ENCODE measurements at regions of chr15 and their contacts with region 1.

Region 1: GRCh38 chr15:88904624-88905327 is 8.4 kb downstream of the MFGE8 start:
- DNase-seq: peak; percentile 94
- H3K4me3 Mint-ChIP-seq: no peak overlapping the region
- H3K27ac Mint-ChIP-seq: peak overlapping the region; percentile 77
- H3K4me1 Mint-ChIP-seq: peaks cover 30% of the 10 kb centered on the region
- H3K27me3 Mint-ChIP-seq: no peaks in the 10 kb centered on the region

Region 2: DNA sequence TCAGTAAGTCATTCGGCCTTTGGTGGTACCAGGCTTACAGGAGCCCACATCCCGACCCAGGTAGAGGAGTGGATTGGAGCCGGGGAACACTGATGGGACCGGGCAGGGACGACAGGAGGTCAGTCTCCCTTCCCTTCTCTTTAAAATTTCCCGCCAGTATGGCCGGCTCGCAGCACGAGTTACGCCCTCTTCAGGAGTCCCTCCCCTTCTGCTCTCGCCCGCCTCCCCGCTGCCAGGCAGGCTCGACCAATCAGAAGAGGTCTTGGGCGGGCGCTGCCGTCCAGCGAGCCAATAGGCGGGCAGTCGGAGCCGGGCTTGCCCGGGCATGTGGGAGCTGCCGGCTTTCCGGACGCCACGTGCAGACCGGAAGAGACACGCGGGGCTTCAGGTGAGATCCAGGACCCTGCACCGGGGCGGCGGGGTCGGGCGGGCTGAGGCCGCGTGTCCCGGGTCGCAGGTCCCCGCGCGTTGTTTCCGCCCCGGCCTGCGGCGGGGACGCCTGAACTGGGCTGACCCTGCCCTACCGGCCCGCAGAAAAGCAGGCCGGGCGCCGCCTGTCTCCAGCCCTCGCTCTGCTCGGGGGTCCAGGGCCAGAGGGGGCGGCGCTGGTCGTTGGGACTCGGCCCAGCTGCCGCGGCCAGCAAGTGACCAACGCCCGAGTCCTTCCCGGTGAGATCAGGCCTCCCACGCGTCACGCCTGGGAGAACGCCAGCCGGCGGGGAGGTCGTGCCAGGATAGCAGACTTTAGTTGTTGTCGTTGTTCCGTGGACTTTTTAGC is 283.6 kb before region 1 on chr15 and contains the start of gene AEN:
- CTCF ChIA-PET with region 1: interaction called, 10 read pairs
- POLR2A ChIA-PET with region 1: interaction called, 6 read pairs
- DNase-seq: peak; percentile 97
- H3K4me3 Mint-ChIP-seq: peak within 1 kb of the TSS; percentile 85
- H3K27ac Mint-ChIP-seq: peak within 1 kb of the TSS; percentile 91
- H3K4me1 Mint-ChIP-seq: peaks cover 42% of the 10 kb centered on the region
- H3K27me3 Mint-ChIP-seq: peaks cover 2% of the 10 kb centered on the region
- total RNA-seq, gene AEN: 32.7 to 33.5 TPM

Region 3: GRCh38 chr15:88791637-88792036 is 113.1 kb before region 1 on chr15:
- CTCF ChIA-PET with region 1: no interaction called
- POLR2A ChIA-PET with region 1: no interaction called
- DNase-seq: no peak
- H3K4me3 Mint-ChIP-seq: no peak overlapping the region
- H3K27ac Mint-ChIP-seq: no peak overlapping the region
- H3K4me1 Mint-ChIP-seq: no peaks in the 10 kb centered on the region
- H3K27me3 Mint-ChIP-seq: peaks cover 35% of the 10 kb centered on the region

Region 4: DNA sequence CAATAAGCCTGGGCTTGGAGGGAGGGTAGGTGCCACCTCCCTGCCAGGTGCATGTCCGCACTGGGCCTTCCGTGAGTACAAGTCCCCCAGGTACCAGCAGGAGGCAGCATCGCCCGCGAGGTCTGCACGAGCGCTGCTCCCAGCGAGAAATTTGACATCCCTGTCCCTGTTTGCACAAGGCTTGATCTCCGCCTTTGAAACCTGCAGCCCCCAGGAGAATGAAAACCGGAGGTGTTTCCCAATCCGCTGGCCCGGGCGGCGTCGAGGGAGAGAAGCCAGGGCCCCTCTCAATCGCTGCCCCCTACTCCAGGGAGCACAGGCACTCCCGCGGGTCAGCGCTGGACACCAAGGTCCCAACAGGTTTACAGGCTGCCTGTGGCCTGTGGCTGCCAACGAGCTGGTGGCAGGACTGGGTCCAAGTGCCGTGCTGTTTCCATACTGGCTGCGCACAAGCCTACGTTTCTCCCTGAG is 10.4 kb before region 1 on chr15:
- CTCF ChIA-PET with region 1: interaction called, 73 read pairs
- POLR2A ChIA-PET with region 1: interaction called, 16 read pairs
- DNase-seq: peak; percentile 88
- H3K4me3 Mint-ChIP-seq: peak overlapping the region; percentile 79
- H3K27ac Mint-ChIP-seq: peak overlapping the region; percentile 49
- H3K4me1 Mint-ChIP-seq: peaks cover 38% of the 10 kb centered on the region
- H3K27me3 Mint-ChIP-seq: no peaks in the 10 kb centered on the region

Region 5: DNA sequence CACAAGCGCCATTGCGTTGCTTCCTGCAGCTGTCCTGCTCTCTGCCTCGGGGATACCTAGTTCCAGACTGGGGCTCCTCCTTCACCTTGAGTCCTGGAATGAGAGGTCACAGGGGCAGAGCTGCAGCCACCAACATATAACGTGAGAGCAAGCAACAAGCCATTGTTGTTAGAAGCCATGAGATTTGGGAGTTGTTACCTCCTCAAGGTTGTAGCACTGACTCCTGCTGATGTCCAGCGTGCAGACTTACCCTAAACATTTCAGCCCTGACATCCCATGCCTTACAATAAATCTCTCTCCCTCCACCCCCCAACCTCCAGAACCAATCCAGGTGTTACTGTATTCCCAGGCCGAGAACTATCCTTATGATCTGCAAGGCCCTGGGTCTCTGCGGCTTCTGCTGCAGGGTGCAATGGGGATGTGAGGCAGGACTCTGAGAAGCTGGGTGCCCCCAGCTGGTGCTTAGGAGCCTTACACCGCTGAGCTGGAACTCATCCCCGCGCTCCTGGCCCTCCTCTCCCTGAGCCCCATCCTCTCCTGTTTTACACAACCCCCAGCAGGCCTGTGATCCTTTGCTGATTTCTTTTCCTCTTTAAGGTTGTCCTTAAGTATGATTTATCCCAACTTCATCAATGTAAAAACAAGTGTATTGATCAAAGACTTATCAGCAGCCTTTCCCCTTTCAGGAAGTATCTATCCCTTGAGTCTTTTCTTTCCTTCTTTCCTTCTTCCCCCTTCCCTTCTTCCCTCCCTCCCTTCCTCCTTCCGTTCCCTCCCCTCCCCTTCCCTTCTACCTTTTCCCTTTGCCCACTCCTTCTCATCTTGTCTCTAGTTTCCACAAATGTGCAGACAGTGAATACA is 99.3 kb after region 1 on chr15:
- CTCF ChIA-PET with region 1: interaction called, 11 read pairs
- POLR2A ChIA-PET with region 1: no interaction called
- DNase-seq: no peak
- H3K4me3 Mint-ChIP-seq: no peak overlapping the region
- H3K27ac Mint-ChIP-seq: no peak overlapping the region
- H3K4me1 Mint-ChIP-seq: peaks cover 4% of the 10 kb centered on the region
- H3K27me3 Mint-ChIP-seq: peaks cover 17% of the 10 kb centered on the region

Region 6: DNA sequence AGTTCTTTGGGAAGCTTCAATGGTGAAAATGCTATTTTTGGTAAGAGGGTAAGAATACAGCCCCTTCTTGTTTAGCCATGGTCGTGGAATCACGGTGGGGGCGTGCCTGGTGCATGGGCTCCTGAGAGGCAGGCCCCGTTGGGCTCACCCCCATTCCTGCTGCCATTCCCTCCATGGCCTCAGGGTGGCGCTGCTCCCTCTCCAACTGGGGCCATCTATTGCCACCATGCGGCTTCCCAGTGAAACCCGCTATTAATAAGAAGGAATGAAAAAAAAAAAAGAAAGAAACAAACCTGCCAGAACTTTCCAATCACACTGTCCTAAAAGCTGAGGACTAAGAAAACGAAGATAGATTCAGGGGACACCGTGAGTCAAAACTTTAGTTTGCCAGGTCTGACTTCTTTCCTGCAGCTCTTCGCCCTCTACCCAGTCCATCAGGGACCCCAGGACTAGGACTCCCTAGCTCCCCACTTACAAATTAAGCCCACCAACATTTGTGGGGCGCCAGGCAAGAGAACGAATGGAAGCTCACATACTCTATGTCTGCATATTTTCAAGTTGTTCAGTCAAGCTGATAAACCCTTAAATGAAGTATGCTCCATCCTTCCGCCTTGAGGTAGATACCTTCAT is 152.8 kb after region 1 on chr15:
- CTCF ChIA-PET with region 1: interaction called, 21 read pairs
- POLR2A ChIA-PET with region 1: no interaction called
- DNase-seq: peak; percentile 84
- H3K4me3 Mint-ChIP-seq: no peak overlapping the region
- H3K27ac Mint-ChIP-seq: no peak overlapping the region
- H3K4me1 Mint-ChIP-seq: peaks cover 8% of the 10 kb centered on the region
- H3K27me3 Mint-ChIP-seq: peaks cover 3% of the 10 kb centered on the region

Region 7: DNA sequence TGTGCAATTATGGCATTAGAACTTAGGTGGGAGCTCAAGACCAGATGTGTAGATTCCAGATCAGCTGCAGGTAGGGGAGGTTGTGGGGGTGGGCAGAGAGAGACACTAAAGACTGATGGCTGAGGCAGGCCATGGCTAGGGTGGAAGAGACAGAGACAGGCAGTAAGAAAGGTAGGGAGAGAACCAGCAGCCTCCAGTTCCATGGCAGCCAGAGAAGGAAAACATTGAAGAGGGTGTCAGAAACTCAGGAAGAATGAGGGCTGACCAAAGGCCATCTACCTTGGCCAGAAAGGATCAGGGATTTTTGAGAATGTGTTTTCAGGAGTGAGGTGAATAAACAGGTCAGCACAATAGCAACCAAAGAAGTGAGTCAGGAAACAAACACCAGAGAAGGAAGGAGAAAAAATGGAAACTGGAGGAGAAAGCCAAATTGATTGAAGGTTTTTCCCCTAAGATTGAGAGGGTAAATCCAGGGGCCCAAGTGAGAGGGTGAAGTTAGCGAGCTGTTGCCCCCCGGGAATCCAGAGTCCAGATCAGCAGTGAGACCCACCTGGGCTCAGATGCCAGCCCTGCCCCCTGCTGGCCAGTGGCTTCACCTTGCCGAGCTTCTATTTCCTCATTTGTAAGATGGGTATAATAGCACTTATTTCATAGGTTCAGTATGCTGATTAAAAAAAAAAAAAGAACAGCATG is 224.5 kb after region 1 on chr15:
- CTCF ChIA-PET with region 1: interaction called, 17 read pairs
- POLR2A ChIA-PET with region 1: no interaction called
- DNase-seq: peak; percentile 56
- H3K4me3 Mint-ChIP-seq: no peak overlapping the region
- H3K27ac Mint-ChIP-seq: no peak overlapping the region
- H3K4me1 Mint-ChIP-seq: peaks cover 37% of the 10 kb centered on the region
- H3K27me3 Mint-ChIP-seq: no peaks in the 10 kb centered on the region

Measured in activated CD4-positive, alpha-beta memory T cell treated with anti-CD3 and anti-CD28 coated beads, Interleukin-2, amount 10 ng/mL, durations not matched to agents 7 days and 5 days (primary cell).